ENCODE measurements at regions of chr18 and their contacts with region 1.

Region 1: DNA sequence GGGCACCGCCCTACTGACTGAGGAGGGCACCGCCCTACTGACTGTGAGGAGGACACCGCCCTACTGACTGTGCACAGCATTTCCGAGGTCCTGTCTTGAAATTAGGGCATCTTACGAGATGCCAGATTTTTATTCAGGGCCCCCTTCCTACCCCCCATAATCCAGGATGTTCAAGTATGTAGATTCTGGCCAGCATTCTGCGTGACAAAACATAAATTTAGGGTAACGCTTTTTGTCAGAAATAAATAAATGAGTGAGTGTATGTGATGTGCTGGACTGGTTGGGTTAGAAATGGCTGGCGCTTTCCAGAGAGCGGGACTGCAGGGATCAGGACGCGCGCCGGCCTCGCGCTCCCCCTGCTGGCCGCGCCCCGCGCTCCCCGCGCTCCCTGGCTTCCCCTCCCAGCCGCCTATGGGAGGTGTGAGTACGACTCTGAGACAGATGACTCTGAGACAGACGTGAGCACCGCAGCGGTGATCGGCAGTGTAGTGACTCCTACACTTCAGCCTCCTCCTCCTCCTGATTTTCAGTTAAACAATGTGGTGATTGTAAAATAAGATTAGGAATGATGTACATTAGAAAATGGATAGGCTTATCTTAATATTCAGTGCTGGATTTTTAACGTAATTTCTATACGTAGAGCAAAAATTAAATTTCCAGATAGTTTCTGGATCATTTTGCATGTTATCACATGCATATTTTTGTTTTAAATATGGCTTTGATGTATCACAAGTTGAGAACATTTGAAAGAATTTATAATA is 149.2 kb upstream of the NFATC1 start:
- DNase-seq: peak; percentile 76
- ATAC-seq: peak; percentile 99

Region 2: GRCh38 chr18:78713064-78713463 is 533.5 kb before region 1 on chr18:
- intact Hi-C with region 1: no loop called
- DNase-seq: no peak
- ATAC-seq: no peak

Region 3: GRCh38 chr18:78875268-78875997 is 371.1 kb before region 1 on chr18:
- intact Hi-C with region 1: loop called (anchors 5 kb)
- DNase-seq: no peak
- ATAC-seq: no peak

Region 4: GRCh38 chr18:79294235-79294634 is 47.7 kb after region 1 on chr18:
- intact Hi-C with region 1: no loop called
- DNase-seq: no peak
- ATAC-seq: no peak

Region 5: GRCh38 chr18:79540161-79540903 is 293.8 kb after region 1 on chr18:
- intact Hi-C with region 1: no loop called
- DNase-seq: no peak
- ATAC-seq: no peak